Activated CD4-positive, alpha-beta T cell treated with anti-CD3 and anti-CD28 coated beads for 36 hours (primary cell): ENCODE measurements at regions of chr17 and their contacts with region 1.

Region 1: DNA sequence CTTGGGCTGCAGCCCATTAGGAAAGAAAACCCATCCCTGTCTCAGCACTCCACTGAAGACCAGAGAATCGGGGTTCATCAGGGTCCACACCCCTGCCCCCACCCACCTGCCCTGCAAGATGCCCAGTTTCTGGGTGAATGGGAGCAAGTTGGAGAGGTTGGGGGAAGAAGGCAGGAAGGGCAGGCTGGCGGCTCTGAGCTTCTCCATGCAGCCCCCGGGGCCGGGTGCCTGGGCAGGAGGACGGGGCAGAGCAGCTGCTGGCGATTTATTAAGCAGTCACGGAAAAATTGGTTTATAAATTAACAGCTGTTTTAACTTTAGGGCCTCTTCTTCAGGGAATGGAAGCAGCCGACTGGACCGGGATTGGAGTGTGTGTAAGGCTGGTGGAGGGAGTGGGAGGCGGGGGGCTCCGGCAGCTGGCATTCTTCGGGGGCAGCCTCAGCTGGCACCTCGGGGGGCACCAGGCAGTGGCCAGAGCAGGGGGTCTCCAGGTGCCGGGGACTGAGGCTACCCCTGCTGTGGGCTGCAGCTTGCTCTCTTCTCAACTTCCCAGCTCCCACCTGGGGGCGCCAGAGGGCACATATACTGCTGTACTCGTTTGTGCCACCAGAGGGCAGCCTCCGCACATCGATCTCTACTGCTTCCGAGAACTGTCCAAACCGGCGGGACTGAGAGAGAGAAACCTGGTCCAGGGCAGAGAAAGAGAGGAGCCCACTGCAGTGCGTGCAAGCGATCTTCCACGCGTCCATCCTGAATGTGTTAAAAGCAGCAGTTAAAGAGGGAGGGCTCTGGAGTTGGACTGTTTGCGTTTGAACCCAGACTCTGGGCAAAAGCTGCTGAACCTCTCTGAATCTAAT is 5.0 kb upstream of the PPP1R1B start:
- DNase-seq: peak; percentile 91
- ATAC-seq: peak; percentile 68
- H3K4me3 Mint-ChIP-seq: peak overlapping the region; percentile 62
- H3K27ac Mint-ChIP-seq: peak overlapping the region; percentile 91
- H3K4me1 Mint-ChIP-seq: peaks cover 26% of the 10 kb centered on the region
- H3K27me3 Mint-ChIP-seq: peaks cover 18% of the 10 kb centered on the region

Region 2: GRCh38 chr17:39199820-39200069 is 422.0 kb before region 1 on chr17:
- CTCF ChIA-PET with region 1: interaction called, 4 read pairs
- POLR2A ChIA-PET with region 1: no interaction called
- intact Hi-C with region 1: loop called in 1 of 2 experiments (anchors 10 kb)
- DNase-seq: peak; percentile 95
- ATAC-seq: peak; percentile 69
- H3K4me3 Mint-ChIP-seq: peak overlapping the region; percentile 98
- H3K27ac Mint-ChIP-seq: peak overlapping the region; percentile 100
- H3K4me1 Mint-ChIP-seq: peaks cover 51% of the 10 kb centered on the region
- H3K27me3 Mint-ChIP-seq: no peaks in the 10 kb centered on the region

Region 3: GRCh38 chr17:39547713-39548478 is 73.9 kb before region 1 on chr17:
- CTCF ChIA-PET with region 1: interaction called, 45 read pairs
- POLR2A ChIA-PET with region 1: no interaction called
- intact Hi-C with region 1: loop called (anchors 1 kb)
- DNase-seq: peak; percentile 86
- ATAC-seq: peak; percentile 90
- H3K4me3 Mint-ChIP-seq: no peak overlapping the region
- H3K27ac Mint-ChIP-seq: no peak overlapping the region
- H3K4me1 Mint-ChIP-seq: no peaks in the 10 kb centered on the region
- H3K27me3 Mint-ChIP-seq: no peaks in the 10 kb centered on the region

Region 4: DNA sequence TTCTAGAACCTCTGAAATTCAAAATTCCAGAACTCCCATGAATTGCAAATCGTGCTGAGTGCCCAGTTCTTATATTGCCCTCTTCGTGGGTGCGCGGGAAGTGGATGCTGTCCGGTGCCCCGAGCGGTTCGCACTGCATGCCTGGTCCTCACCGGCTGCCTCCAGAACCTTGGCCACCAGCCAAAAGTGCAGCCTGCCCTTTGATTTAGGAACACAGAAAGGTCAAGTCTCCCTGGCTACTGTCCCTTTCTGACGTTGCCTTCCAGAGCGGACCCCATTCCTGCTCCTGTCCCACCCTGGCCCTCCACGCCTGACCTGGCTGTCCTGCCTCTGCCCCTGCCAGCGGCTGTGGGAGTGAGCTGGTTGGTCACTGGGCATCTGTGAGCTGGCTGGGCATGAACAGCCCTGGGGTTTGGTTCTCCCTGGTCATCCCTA is 23.7 kb before region 1 on chr17:
- CTCF ChIA-PET with region 1: interaction called, 30 read pairs
- POLR2A ChIA-PET with region 1: no interaction called
- intact Hi-C with region 1: no loop called
- DNase-seq: no peak
- ATAC-seq: no peak
- H3K4me3 Mint-ChIP-seq: no peak overlapping the region
- H3K27ac Mint-ChIP-seq: no peak overlapping the region
- H3K4me1 Mint-ChIP-seq: peaks cover 15% of the 10 kb centered on the region
- H3K27me3 Mint-ChIP-seq: peaks cover 82% of the 10 kb centered on the region

Region 5: GRCh38 chr17:39653662-39654331 is 32.0 kb after region 1 on chr17:
- CTCF ChIA-PET with region 1: interaction called, 39 read pairs
- POLR2A ChIA-PET with region 1: interaction called, 3 read pairs
- intact Hi-C with region 1: loop called in 1 of 2 experiments (anchors 1 kb)
- DNase-seq: peak; percentile 92
- ATAC-seq: peak; percentile 94
- H3K4me3 Mint-ChIP-seq: no peak overlapping the region
- H3K27ac Mint-ChIP-seq: no peak overlapping the region
- H3K4me1 Mint-ChIP-seq: peaks cover 36% of the 10 kb centered on the region
- H3K27me3 Mint-ChIP-seq: no peaks in the 10 kb centered on the region

Region 6: DNA sequence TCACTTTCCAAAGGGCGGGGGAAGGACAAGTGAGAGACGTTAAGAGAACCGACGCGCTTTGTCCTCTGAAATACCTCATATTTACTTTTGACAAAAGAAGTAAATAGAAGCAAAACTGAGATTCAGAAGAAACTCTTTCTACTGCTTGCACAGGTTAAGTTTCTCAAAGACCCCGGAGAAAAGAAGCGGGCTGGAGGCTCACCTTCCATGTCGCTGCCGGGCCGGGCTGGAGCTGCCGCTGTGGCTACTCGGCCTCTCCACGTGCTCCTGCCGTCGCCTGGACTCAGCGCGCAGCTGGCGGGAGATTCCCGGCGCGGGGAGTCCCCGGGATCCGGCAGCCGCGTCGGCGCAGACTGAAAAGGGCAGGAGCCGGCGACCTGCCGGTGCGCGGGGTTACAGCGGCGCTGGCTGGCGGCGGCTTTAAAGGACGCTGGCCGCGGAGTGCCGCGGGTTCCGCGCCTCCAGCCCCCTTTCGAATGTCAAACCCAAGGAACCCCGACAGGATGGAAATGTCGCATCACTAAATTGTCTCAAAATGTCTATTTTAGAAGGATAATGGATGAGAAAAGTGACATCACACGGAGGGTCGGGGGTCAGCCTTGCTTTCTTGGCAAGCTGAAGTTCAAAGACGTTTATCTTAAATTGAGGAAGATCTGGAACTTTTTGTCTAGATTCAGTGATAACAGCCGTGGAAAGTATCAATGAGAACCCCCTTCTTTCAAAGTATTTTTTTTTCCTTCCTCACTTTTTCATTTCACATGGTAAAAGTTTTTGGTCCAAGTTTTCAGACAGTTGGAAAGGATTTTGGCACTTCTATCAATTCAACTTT is 242.4 kb after region 1 on chr17 and contains the start of gene IKZF3:
- CTCF ChIA-PET with region 1: interaction called, 13 read pairs
- POLR2A ChIA-PET with region 1: interaction called, 5 read pairs
- intact Hi-C with region 1: loop called (anchors 1 to 5 kb)
- DNase-seq: peak; percentile 93
- ATAC-seq: peak; percentile 75
- H3K4me3 Mint-ChIP-seq: peak within 1 kb of the TSS; percentile 98
- H3K27ac Mint-ChIP-seq: peak within 1 kb of the TSS; percentile 97
- H3K4me1 Mint-ChIP-seq: peaks cover 67% of the 10 kb centered on the region
- H3K27me3 Mint-ChIP-seq: no peaks in the 10 kb centered on the region
- total RNA-seq, gene IKZF3: 37.6 to 50.4 TPM